Psoas muscle (tissue), 8 donors: ENCODE measurements at regions of chr7 and their contacts with region 1.

Region 1: GRCh38 chr7:73397521-73398281 is 35.9 kb upstream of the FZD9 start:
- DNase-seq: peak; percentile 45 to 82
- ATAC-seq: peak; percentile 89 to 94 (median 91)
- H3K4me3 ChIP-seq: peak overlapping the region; percentile 68
- H3K27ac ChIP-seq: peak overlapping the region; percentile 85
- H3K4me1 ChIP-seq: peaks cover 20% of the 10 kb centered on the region
- H3K27me3 ChIP-seq: no peaks in the 10 kb centered on the region
- CTCF ChIP-seq: no peak

Region 2: GRCh38 chr7:73342645-73343044 is 55.1 kb before region 1 on chr7:
- intact Hi-C with region 1: loop called in 1 of 2 experiments (anchors 5 kb)
- DNase-seq: no peak
- ATAC-seq: peak; percentile 87 to 97 (median 92)
- H3K4me3 ChIP-seq: peak overlapping the region; percentile 38
- H3K27ac ChIP-seq: no peak overlapping the region
- H3K4me1 ChIP-seq: no peaks in the 10 kb centered on the region
- H3K27me3 ChIP-seq: no peaks in the 10 kb centered on the region
- CTCF ChIP-seq: peak; percentile 55

Region 3: DNA sequence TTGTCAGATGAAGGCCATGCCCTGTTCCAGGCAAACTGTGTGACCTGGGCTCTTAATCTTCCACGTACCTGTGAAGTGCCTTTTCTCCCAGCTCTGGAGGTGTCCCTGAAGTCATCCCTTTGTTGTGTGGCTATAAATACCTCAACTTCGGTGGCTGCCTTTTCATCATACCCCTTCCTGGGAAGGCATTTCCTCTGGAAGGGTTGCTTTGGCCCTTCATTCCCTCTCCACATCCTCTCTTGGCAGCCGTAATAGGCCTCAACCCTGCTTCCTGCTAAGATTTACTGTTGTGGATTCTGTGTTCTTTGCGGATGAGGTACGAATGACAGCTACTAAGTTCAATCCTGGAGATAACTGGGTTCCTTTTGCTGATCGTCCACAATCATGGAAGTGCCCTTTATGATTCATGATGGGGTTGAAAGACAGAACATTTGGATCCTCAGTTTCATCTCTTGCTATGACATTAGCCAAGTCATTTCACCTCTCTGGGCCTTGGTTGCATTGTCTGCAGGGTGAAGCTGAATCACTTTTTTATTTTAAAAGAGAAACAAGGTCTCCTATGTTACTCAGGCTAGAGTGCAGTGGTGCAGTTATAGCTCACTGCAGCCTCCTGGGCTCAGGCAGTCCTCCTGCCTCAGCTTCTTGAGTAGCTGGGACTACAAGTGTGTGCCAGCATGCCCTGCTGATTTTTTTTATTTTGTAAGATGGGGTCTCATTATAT is 46.1 kb before region 1 on chr7:
- intact Hi-C with region 1: loop called (anchors 5 kb)
- DNase-seq: no peak
- ATAC-seq: peak in 3 of 4 donors; percentile 35 to 55 (median 53)
- H3K4me3 ChIP-seq: no peak overlapping the region
- H3K27ac ChIP-seq: no peak overlapping the region
- H3K4me1 ChIP-seq: no peaks in the 10 kb centered on the region
- H3K27me3 ChIP-seq: no peaks in the 10 kb centered on the region
- CTCF ChIP-seq: no peak

Region 4: DNA sequence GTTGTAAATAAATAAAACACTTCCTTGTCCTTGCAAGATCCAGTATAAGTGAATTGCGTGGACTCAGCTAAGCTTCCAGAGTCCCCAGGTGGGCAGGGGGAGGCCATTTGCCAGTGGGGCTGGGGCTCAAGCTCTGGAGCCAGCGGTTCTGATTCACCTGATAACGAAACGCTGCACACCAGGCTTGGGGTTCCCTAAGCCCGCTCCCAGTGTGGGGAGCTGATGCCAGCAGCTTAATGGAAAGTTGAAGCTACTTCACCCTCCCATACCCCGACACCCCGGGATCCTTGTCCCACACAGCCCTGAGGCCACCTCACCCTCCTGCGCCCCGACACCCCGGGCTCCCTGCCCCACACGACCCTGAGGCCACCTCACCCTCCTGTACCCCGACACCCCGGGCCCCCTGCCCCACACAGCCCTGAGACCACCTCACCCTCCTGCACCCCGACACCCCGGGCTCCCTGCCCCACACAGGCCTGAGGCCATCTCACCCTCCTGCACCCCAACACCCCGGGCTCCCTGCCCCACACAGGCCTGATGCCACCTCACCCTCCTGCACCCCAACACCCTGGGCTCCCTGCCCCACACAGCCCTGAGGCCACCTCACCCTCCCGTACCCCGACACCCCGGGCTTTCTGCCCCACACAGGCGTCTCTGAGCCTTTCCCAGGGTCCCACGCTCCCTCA is 39.0 kb before region 1 on chr7:
- intact Hi-C with region 1: loop called (anchors 5 kb)
- DNase-seq: no peak
- ATAC-seq: peak in 3 of 4 donors; percentile 4 to 22 (median 16)
- H3K4me3 ChIP-seq: peak overlapping the region; percentile 59
- H3K27ac ChIP-seq: peak overlapping the region; percentile 75
- H3K4me1 ChIP-seq: peaks cover 4% of the 10 kb centered on the region
- H3K27me3 ChIP-seq: no peaks in the 10 kb centered on the region
- CTCF ChIP-seq: no peak

Region 5: GRCh38 chr7:73433924-73434700 is 36.4 kb after region 1 on chr7:
- intact Hi-C with region 1: loop called (anchors 5 kb)
- DNase-seq: no peak
- ATAC-seq: peak in 1 of 4 donors; percentile 0
- H3K4me3 ChIP-seq: peak overlapping the region; percentile 68
- H3K27ac ChIP-seq: peak overlapping the region; percentile 85
- H3K4me1 ChIP-seq: peaks cover 21% of the 10 kb centered on the region
- H3K27me3 ChIP-seq: no peaks in the 10 kb centered on the region
- CTCF ChIP-seq: no peak

Region 6: DNA sequence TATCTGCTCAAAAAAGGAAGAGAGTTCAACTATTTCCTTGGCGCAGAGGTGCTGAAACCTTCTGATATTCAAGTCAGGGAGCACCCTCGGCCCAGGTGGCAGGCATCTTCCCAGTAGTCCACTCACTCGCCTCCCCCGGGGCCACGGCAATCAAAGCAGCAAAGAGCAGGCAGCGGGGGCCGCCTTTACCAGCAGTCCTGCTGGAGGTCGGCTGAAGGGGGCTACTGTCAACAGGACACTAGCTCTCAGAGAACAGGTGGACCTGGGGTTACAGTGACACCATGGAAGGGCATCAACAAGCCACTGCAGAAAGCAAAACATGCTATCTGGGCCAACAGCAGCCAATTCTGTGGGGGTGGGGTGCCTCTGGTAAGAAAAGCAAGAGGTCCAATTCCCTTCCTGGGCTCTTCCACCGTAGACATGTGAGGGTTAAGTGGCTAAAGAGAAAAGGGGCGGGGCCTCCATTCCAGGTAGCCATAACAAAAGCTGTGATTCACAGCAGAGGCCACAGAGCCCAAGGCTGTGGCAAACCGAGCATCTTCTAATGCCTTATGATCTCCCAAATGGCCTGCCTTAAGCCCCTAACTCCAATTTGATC is 45.3 kb after region 1 on chr7:
- intact Hi-C with region 1: loop called in 1 of 2 experiments (anchors 2 kb)
- DNase-seq: no peak
- ATAC-seq: no peak
- H3K4me3 ChIP-seq: no peak overlapping the region
- H3K27ac ChIP-seq: no peak overlapping the region
- H3K4me1 ChIP-seq: peaks cover 16% of the 10 kb centered on the region
- H3K27me3 ChIP-seq: no peaks in the 10 kb centered on the region
- CTCF ChIP-seq: no peak

Region 7: GRCh38 chr7:74026903-74027551 is 629.3 kb after region 1 on chr7:
- intact Hi-C with region 1: no loop called
- DNase-seq: peak; percentile 82 to 88
- ATAC-seq: peak; percentile 54 to 74 (median 69)
- H3K4me3 ChIP-seq: peak overlapping the region; percentile 58
- H3K27ac ChIP-seq: no peak overlapping the region
- H3K4me1 ChIP-seq: peaks cover 22% of the 10 kb centered on the region
- H3K27me3 ChIP-seq: peaks cover 0 to 5% (median 0%) of the 10 kb centered on the region in 3 donors
- CTCF ChIP-seq: peak; percentile 91